Thyroid gland (tissue), 4 donors: ENCODE measurements at regions of chr4 and their contacts with region 1.

Region 1: GRCh38 chr4:139493176-139493575 is 39.3 kb downstream of the RAB33B start:
- DNase-seq: no peak
- H3K4me3 ChIP-seq: no peak overlapping the region
- H3K27ac ChIP-seq: no peak overlapping the region
- H3K4me1 ChIP-seq: peaks cover 0 to 4% of the 10 kb centered on the region in 2 donors
- H3K27me3 ChIP-seq: no peaks in the 10 kb centered on the region
- CTCF ChIP-seq: no peak
- POLR2A ChIP-seq: no peak

Region 2: GRCh38 chr4:139633661-139634060 is 140.5 kb after region 1 on chr4:
- intact Hi-C with region 1: loop called (anchors 10 kb)
- DNase-seq: peak; percentile 36 to 47
- H3K4me3 ChIP-seq: no peak overlapping the region
- H3K27ac ChIP-seq: no peak overlapping the region
- H3K4me1 ChIP-seq: peaks cover 1 to 7% of the 10 kb centered on the region in 2 donors
- H3K27me3 ChIP-seq: no peaks in the 10 kb centered on the region
- CTCF ChIP-seq: peak in 5 of 6 experiments; percentile 32 to 76 (median 71)
- POLR2A ChIP-seq: no peak